Activated CD4-positive, alpha-beta T cell treated with anti-CD3 and anti-CD28 coated beads for 36 hours (primary cell): ENCODE measurements at regions of chr11 and their contacts with region 1.

Region 1: GRCh38 chr11:62573592-62574362 is at the start of gene EEF1G:
- DNase-seq: peak; percentile 99
- ATAC-seq: peak; percentile 97
- H3K4me3 Mint-ChIP-seq: peak within 1 kb of the TSS; percentile 93
- H3K27ac Mint-ChIP-seq: peak within 1 kb of the TSS; percentile 97
- H3K4me1 Mint-ChIP-seq: peaks cover 43% of the 10 kb centered on the region
- H3K27me3 Mint-ChIP-seq: no peaks in the 10 kb centered on the region
- total RNA-seq, gene EEF1G: 1,986 to 2,351 TPM

Region 2: GRCh38 chr11:62123669-62124185 is 450.1 kb before region 1 on chr11 and contains the start of gene INCENP:
- CTCF ChIA-PET with region 1: no interaction called
- POLR2A ChIA-PET with region 1: no interaction called
- intact Hi-C with region 1: loop called in 1 of 2 experiments (anchors 5 kb)
- DNase-seq: peak; percentile 97
- ATAC-seq: peak; percentile 98
- H3K4me3 Mint-ChIP-seq: peak within 1 kb of the TSS; percentile 98
- H3K27ac Mint-ChIP-seq: peak within 1 kb of the TSS; percentile 90
- H3K4me1 Mint-ChIP-seq: peaks cover 29% of the 10 kb centered on the region
- H3K27me3 Mint-ChIP-seq: no peaks in the 10 kb centered on the region
- total RNA-seq, gene INCENP: 125 to 140 TPM

Region 3: GRCh38 chr11:62542750-62543567 is 30.8 kb before region 1 on chr11:
- CTCF ChIA-PET with region 1: interaction called, 24 read pairs
- POLR2A ChIA-PET with region 1: interaction called, 3 read pairs
- intact Hi-C with region 1: no loop called
- DNase-seq: peak; percentile 84
- ATAC-seq: peak; percentile 67
- H3K4me3 Mint-ChIP-seq: peak overlapping the region; percentile 83
- H3K27ac Mint-ChIP-seq: peak overlapping the region; percentile 58
- H3K4me1 Mint-ChIP-seq: peaks cover 80% of the 10 kb centered on the region
- H3K27me3 Mint-ChIP-seq: peaks cover 3% of the 10 kb centered on the region

Region 4: DNA sequence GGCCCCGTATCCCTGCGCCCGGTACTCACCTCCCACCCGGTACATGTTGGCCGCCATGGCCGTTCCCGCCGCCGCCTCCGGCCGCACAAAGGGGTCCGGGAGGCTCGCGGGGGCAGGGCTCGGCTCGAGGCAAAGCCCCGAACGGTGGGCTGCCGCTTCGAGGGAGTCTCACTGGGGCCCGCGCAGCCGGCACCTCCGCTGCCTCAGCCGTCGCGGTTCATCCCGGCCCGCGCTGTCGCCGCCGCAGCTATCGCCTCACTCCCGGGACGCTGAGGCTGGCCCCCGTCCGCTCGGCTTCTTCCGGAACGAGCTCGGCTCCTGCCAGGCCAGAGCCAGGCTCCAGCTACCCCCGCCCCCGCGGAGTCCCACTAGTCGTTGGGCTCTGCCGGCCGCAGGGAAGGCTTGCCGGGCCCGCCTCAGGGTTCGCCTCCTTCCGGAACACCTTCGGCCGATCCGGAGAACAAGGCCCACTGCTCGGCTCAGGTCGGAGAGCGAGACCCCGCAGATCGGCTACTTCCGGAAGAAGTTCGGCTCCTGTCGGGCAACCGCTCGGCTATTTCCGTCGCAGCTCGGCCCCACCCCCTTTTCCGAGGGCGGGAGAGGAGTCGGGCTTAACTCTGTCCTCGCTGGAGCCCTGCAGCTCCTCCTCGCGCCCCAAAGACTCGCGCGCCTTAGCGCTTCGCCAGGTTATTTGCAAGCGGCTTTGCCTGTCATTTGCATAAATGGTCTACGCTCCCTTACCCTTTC is 27.8 kb after region 1 on chr11 and contains the start of gene MTA2:
- CTCF ChIA-PET with region 1: interaction called, 4 read pairs
- POLR2A ChIA-PET with region 1: interaction called, 11 read pairs
- intact Hi-C with region 1: loop called (anchors 1 kb)
- DNase-seq: peak; percentile 100
- ATAC-seq: peak; percentile 89
- H3K4me3 Mint-ChIP-seq: peak within 1 kb of the TSS; percentile 91
- H3K27ac Mint-ChIP-seq: peak within 1 kb of the TSS; percentile 96
- H3K4me1 Mint-ChIP-seq: peaks cover 51% of the 10 kb centered on the region
- H3K27me3 Mint-ChIP-seq: no peaks in the 10 kb centered on the region
- total RNA-seq, gene MTA2: 159 to 179 TPM

Region 5: DNA sequence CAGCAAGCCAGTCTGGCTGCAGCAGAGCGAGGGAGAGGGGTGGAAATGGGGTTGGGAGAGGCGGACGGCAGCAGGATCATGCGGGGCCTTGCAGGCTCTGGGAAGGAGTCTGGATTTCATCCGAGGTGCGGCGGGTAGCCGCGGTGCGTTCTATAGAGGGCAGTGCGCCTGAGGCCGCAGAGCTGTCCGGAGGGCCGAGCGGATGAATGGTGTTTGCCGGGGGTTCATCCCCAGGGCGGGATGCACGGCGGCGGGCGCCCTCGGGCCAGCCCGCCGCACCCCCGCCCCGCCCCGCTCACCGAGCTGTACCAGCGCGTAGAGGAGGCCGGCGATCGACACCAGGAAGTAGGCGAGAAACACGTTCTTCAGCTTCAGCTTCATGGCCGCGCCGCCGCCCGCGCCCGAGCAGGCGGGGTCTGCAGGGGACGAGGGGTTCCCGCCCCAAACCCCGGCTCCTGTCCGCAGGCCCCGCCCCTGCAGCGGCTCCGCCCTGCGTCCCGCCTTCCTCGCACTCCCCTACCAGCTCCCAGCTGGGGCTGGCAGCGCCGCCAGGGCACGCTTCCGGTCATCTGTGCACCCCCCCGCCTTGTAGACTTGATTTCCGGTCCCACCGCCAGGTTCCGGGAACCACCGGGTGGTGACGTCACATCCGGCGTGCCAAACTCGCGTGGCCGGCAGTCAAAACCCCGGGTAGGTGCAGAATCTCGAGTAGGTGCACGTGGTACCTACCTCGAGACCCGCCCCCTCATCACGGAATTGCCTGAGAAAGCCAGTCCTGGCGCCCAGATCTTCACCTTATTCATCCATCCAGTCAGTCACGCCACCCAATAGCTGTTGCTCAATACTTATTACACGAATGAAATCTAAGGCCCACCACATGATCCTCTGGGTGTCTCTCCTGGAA is 48.0 kb after region 1 on chr11 and contains the start of gene B3GAT3:
- CTCF ChIA-PET with region 1: interaction called, 3 read pairs
- POLR2A ChIA-PET with region 1: no interaction called
- intact Hi-C with region 1: loop called in 1 of 2 experiments (anchors 1 kb)
- DNase-seq: peak; percentile 97
- ATAC-seq: peak; percentile 94
- H3K4me3 Mint-ChIP-seq: peak within 1 kb of the TSS; percentile 92
- H3K27ac Mint-ChIP-seq: peak within 1 kb of the TSS; percentile 94
- H3K4me1 Mint-ChIP-seq: peaks cover 29% of the 10 kb centered on the region
- H3K27me3 Mint-ChIP-seq: no peaks in the 10 kb centered on the region
- total RNA-seq, gene B3GAT3: 48.7 to 57.5 TPM

Region 6: GRCh38 chr11:62665075-62665598 is 91.4 kb after region 1 on chr11 and contains the starts of genes C11orf98 and CSKMT:
- CTCF ChIA-PET with region 1: interaction called, 6 read pairs
- POLR2A ChIA-PET with region 1: interaction called, 13 read pairs
- intact Hi-C with region 1: loop called in 1 of 2 experiments (anchors 1 kb)
- DNase-seq: peak; percentile 97
- ATAC-seq: peak; percentile 90
- H3K4me3 Mint-ChIP-seq: peak within 1 kb of the TSS; percentile 93
- H3K27ac Mint-ChIP-seq: peak within 1 kb of the TSS; percentile 89
- H3K4me1 Mint-ChIP-seq: peaks cover 38% of the 10 kb centered on the region
- H3K27me3 Mint-ChIP-seq: no peaks in the 10 kb centered on the region
- total RNA-seq, gene C11orf98: 108 to 135 TPM
- total RNA-seq, gene CSKMT: 12.6 to 31.3 TPM